Right cardiac atrium (tissue), 5 donors: ENCODE measurements at regions of chr10 and their contacts with region 1.

Region 1: GRCh38 chr10:35126530-35127296 is at the start of gene CREM:
- DNase-seq: peak; percentile 99
- ATAC-seq: peak; percentile 98
- H3K4me3 ChIP-seq: peak within 1 kb of the TSS; percentile 93
- H3K27ac ChIP-seq: peak within 1 kb of the TSS; percentile 99
- H3K4me1 ChIP-seq: peaks cover 3% of the 10 kb centered on the region
- H3K27me3 ChIP-seq: no peaks in the 10 kb centered on the region
- total RNA-seq, gene CREM: 31.9 to 39.9 (median 37.8) TPM

Region 2: DNA sequence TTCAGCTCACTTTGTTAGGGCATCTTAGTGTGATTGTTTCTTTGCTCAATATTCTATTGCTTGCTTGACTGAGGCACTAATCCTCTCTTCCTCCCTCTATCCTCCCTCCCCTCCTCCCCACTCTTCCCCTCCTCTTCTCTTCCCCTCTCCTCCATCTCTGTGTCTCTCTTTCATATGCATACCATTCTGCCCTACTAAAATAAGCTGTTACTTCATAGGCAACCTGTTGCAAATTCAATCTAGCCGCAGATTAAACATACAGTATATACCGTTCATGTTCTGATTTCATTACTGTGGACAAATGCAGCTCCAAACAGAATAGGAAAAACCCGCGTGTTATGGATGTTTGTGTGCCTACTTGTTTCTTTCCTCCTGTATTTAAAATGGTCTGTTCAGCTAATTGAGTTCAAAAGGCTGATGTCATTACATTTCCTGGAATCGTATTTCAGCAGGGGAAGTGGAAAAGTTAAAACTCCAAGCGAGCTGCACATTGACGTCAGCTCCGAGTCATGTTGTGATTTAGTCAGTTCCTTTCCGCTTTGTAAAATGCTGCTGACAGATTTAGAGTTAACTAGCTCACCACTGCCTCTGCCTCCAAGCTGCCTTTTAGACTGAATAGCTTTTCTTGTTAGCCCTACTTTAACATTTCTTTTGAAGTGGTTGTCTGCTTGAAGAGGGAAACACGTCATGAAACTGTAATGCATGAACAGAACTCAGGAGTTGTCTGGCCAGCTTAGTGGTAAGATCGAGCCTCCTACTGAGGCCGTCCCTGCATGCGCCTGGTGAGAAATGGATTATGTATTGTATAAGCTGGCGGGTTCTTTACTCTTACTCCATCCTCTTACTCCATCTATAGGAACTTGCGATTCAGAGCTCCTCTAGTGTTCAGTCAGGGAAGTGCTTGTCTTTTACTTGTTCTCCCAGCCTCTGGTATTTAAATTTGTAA is 68.9 kb after region 1 on chr10:
- intact Hi-C with region 1: loop called (anchors 5 kb)
- DNase-seq: peak; percentile 73 to 78 (median 77)
- ATAC-seq: peak; percentile 90 to 93
- H3K4me3 ChIP-seq: peak overlapping the region; percentile 96
- H3K27ac ChIP-seq: peak overlapping the region; percentile 100
- H3K4me1 ChIP-seq: no peaks in the 10 kb centered on the region
- H3K27me3 ChIP-seq: no peaks in the 10 kb centered on the region

Region 3: DNA sequence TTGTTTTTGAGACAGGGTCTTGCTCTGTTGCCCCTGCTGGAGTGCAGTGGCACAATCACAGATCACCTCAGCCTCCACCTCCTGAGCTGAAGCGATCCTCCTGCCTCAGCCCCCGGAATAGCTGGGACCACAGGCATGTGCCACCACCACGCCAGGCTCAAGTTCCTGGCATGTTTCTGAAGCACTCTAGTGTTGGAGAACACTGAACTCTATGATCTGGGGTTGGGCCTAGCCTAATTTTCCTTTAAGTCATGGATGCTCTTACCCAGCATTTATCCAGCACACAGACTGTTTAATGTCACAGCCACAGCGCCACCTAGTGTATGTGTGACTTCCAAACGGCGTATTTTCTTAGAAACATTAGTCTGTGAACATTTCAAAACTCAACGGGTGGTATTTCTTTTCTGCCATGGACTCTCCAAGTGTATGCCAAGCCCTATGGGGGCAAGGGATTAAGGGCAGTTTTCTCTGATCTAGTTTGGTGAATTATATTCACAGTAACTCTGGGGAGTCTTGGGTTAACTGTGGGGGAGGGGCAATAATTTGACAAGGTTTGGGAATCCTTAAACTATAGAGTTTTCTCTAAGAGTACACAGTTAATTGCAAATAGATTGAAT is 91.7 kb after region 1 on chr10:
- intact Hi-C with region 1: loop called in 3 of 4 experiments (anchors 5 kb)
- DNase-seq: peak; percentile 80 to 90 (median 85)
- ATAC-seq: peak; percentile 78 to 85
- H3K4me3 ChIP-seq: no peak overlapping the region
- H3K27ac ChIP-seq: no peak overlapping the region
- H3K4me1 ChIP-seq: no peaks in the 10 kb centered on the region
- H3K27me3 ChIP-seq: no peaks in the 10 kb centered on the region

Region 4: GRCh38 chr10:35336084-35336831 is 209.5 kb after region 1 on chr10 and contains the start of gene CCNY:
- intact Hi-C with region 1: loop called in 1 of 4 experiments (anchors 10 kb)
- DNase-seq: peak; percentile 81 to 94 (median 93)
- ATAC-seq: peak; percentile 91 to 94
- H3K4me3 ChIP-seq: peak within 1 kb of the TSS; percentile 80
- H3K27ac ChIP-seq: peak within 1 kb of the TSS; percentile 94
- H3K4me1 ChIP-seq: peaks cover 25% of the 10 kb centered on the region
- H3K27me3 ChIP-seq: no peaks in the 10 kb centered on the region
- total RNA-seq, gene CCNY: 63.7 to 72.1 (median 66.8) TPM